ENCODE measurements at regions of chr4 and their contacts with region 1.

Region 1: DNA sequence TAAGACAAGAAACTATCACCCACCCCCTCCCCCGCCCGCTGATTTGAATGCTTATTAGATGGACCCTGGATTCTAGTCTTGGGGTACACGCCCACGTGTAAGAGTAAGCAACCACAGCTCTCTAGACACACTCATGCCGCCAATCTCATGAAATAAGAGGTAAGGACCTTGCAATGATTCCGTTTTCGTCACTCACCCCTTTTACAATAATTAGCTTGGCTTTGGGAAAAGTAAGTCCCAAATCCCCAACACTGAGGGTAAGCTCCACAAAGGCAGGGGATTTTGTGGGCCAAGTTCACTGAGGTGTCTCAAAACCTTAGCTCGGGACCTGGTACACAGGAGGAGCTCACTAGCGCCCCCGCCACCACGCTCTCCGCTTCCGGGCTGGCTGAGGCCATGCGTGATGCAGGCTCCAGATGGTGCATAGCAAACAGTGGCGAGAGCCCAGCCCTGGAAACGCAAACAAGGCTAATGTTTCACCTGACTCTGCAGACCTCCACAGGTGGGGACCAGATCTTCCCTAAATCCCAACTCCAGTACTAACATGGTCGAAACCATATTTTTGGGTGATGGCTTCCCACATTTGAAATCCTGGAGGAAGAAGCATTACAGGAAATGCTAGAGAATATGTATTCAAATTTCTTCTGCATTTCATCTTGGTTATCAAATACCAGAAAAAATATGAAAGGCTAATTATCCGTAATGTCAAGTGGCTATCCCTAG is 4.1 kb downstream of the PLAC8 start:
- DNase-seq: peak; percentile 86
- H3K4me3 Mint-ChIP-seq: peak overlapping the region; percentile 89
- H3K27ac Mint-ChIP-seq: peak overlapping the region; percentile 93
- H3K4me1 Mint-ChIP-seq: peaks cover 58% of the 10 kb centered on the region
- H3K27me3 Mint-ChIP-seq: no peaks in the 10 kb centered on the region

Region 2: DNA sequence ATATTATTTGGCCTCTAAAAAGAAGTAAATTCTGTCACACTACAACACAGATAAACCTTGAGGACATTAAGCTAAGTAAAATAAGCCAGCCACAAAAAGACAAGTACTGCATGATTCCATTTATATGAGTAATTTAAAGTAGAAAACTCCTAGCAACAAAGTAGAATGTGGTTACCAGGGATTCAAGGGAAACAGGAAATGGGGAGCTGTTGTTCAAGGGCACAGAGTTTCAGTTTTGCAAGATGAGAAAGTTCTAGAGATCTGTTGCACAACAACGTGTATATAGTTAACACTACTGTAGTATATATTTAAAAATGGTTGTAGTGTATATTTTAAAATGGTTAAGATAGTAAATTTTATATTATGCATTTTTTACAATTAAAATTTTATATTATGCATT is 244.8 kb before region 1 on chr4:
- intact Hi-C with region 1: loop called (anchors 5 kb)
- DNase-seq: peak; percentile 24
- H3K4me3 Mint-ChIP-seq: no peak overlapping the region
- H3K27ac Mint-ChIP-seq: peak overlapping the region; percentile 91
- H3K4me1 Mint-ChIP-seq: peaks cover 48% of the 10 kb centered on the region
- H3K27me3 Mint-ChIP-seq: no peaks in the 10 kb centered on the region

Region 3: DNA sequence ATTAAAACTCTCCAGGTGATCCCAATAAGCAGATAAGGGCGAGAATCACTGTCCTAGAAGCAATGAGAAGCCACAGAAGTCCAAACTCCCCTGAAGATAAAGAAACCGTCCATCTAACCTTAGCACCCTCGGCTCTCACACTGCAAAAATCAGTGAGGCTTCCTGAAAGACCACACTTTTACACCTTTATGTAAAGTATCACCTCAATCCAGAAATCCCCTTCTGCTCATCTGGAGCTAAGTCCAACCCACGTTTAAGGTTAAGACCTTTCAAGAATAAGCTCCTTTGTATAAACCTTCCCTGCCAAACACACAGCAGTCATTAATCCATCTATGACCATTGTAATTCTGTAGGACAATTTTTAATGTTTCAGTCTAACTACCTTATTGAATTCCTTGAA is 141.4 kb before region 1 on chr4:
- intact Hi-C with region 1: no loop called
- DNase-seq: no peak
- H3K4me3 Mint-ChIP-seq: no peak overlapping the region
- H3K27ac Mint-ChIP-seq: no peak overlapping the region
- H3K4me1 Mint-ChIP-seq: peaks cover 20% of the 10 kb centered on the region
- H3K27me3 Mint-ChIP-seq: no peaks in the 10 kb centered on the region

Region 4: GRCh38 chr4:83022724-83023450 is 87.5 kb before region 1 on chr4:
- intact Hi-C with region 1: no loop called
- DNase-seq: no peak
- H3K4me3 Mint-ChIP-seq: no peak overlapping the region
- H3K27ac Mint-ChIP-seq: no peak overlapping the region
- H3K4me1 Mint-ChIP-seq: peaks cover 9% of the 10 kb centered on the region
- H3K27me3 Mint-ChIP-seq: peaks cover 3% of the 10 kb centered on the region

Region 5: DNA sequence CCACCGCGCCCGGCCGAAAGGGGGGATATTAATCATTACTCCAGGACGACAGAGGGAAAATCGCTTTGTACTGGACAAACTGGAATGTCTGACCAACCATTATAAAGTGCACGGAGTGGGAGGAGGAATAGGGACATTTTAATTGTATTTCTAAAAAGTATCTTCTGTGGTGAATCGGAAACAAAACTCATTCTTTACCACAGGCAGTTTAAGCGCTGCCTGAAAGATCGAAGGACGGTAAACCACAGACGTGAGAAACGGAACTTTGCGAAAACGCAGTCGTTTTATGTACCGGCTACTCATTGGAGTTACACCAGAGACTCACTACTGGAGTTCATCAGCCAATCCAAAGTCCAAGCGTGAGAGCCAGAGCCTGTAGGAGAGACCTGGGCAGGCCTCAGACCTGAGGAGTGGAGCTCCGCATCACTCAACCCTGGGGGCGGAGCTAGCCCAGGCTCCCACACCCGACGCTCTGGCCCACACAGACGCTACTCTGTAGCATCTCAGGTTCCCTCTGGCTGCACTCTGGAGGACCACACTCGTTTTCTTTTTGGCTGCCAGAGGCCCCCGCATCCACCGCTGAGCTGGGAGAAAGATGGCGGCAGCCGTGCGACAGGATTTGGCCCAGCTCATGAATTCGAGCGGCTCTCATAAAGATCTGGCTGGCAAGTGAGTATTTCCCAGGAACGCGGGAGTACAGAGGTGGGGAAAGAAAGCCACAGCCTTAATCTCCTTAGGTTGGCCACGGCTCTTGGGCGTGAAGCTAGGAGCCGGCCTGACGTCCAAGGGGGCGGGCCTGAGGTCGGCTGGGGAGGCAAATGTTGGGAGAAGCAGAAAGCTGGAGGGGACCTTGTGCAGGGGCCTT is 75.5 kb before region 1 on chr4 and contains the start of gene COPS4:
- intact Hi-C with region 1: loop called (anchors 1 kb)
- DNase-seq: peak; percentile 95
- H3K4me3 Mint-ChIP-seq: peak within 1 kb of the TSS; percentile 98
- H3K27ac Mint-ChIP-seq: peak within 1 kb of the TSS; percentile 99
- H3K4me1 Mint-ChIP-seq: peaks cover 20% of the 10 kb centered on the region
- H3K27me3 Mint-ChIP-seq: peaks cover 6% of the 10 kb centered on the region
- total RNA-seq, gene COPS4: 35.8 and 38.8 TPM in 2 replicates

Region 6: DNA sequence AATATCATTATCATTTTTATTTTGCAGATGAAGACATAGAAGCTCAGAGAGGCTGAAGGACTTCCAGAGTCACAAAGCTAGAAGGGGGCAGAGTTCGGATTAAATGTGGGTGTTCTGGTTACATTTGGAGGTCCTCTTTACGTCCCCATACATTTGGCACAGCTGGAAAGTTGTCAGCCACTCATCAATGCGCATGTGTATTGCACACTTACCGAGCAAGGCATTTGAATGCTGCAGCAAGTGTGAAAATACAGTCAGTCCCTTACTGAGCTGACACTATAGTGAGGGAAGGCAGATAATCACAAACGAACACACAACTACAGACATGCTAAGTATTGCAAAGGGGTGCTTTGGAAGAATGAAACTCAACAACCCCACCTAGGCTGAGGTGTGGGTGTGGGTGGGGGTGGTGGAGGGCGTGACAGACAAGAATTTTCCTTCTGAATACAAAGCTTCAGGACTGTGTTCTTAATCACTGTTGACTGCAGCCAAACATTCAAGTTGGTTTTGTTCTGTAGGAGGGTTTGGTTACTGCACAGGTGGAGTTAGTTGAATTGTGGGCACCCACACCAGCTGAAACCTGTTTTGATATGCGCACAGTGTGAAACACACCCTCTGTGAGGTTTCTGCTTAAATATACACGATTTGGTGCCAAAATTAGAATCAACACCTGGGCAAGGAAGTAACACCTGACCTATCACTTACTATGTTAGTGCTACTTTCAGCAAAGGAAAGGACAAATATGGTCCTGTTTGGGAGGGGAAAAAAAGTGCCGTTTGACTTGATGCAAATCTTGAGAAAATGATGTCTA is 101.9 kb after region 1 on chr4:
- intact Hi-C with region 1: loop called (anchors 1 kb)
- DNase-seq: peak; percentile 59
- H3K4me3 Mint-ChIP-seq: peak overlapping the region; percentile 40
- H3K27ac Mint-ChIP-seq: peak overlapping the region; percentile 59
- H3K4me1 Mint-ChIP-seq: peaks cover 79% of the 10 kb centered on the region
- H3K27me3 Mint-ChIP-seq: peaks cover 5% of the 10 kb centered on the region

Region 7: DNA sequence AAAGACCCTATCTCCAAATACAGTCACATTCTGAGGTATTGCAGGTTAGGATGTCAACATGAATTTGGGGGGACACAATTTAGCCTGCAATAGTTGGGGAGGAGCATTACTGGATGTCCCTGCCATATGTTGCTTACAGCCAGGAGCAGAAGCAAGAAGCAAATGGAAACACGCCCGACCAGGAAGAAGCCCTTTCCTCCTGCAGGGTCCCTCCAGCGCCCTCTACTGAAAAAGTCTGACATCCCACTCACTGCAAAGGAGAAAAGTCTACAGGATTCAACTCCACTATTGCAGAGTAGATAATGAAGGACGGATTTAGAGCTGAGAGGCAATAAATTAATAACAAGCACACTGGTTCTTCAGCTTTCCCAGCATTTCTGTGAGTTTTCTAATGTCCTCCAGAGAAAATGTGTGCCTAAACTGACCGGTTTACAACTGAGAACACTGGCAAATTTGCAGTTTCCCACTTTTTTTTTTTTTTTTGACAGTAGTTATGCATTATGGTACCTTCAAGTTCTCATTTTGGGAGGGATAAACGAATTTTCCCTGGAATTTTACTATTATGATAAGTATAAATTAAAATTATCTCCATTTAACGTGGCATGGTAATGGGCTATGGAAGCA is 142.5 kb after region 1 on chr4:
- intact Hi-C with region 1: loop called (anchors 1 kb)
- DNase-seq: peak; percentile 62
- H3K4me3 Mint-ChIP-seq: no peak overlapping the region
- H3K27ac Mint-ChIP-seq: no peak overlapping the region
- H3K4me1 Mint-ChIP-seq: peaks cover 37% of the 10 kb centered on the region
- H3K27me3 Mint-ChIP-seq: peaks cover 7% of the 10 kb centered on the region

Region 8: DNA sequence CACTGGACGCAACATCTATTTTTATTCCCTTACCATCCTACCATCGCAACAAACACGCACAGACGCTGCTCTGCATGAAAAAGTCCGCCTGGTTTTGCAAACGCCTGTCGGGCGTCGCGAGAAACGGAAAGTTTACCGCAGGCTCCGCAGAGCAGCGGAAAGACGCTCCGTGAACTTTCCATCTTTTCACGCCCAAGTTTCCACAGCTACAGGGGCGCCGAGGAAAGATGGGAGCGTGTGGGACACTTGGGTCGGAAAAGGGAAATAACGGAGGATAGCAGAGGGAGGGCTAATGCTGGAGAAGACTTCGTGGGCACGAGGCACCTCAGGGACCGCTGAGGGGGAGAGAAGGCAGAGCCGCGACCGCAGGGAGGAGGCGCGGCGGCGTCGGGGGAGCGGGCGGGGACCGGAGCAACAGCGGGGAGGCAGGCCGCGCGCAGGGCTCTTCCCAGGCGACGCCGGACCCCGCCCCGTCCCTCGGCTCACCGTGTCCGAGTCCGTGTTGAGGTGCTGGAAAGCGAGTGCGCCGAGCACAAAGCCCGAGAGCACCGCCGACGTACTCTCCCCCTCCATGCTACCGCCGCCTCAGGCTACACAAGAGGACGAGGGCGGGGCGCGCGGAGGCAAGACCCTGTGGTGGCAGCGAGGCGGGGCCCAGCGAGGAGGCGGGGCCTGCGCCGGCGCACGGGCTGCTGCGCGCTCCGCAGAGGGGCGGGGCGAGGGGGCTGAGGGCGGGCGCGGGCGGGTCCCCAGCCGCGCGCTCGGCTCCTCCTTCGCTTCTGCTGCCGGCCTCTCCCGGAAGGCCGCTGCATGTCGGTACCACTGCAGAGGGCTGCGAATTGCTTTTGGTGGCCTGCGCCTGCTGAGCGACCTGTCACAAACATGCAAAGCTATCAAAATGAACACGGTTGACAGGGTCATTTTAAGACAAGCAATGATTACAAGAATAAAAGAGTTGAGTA is 374.4 kb after region 1 on chr4 and contains the start of gene ABRAXAS1:
- intact Hi-C with region 1: loop called (anchors 1 kb)
- DNase-seq: peak; percentile 91
- H3K4me3 Mint-ChIP-seq: peak within 1 kb of the TSS; percentile 90
- H3K27ac Mint-ChIP-seq: peak within 1 kb of the TSS; percentile 95
- H3K4me1 Mint-ChIP-seq: peaks cover 10% of the 10 kb centered on the region
- H3K27me3 Mint-ChIP-seq: peaks cover under 1% of the 10 kb centered on the region
- total RNA-seq, gene ABRAXAS1: 11.0 and 11.3 TPM in 2 replicates